AG04450 (cell line): ENCODE measurements at regions of chr17 and their contacts with region 1.

Region 1: GRCh38 chr17:45021607-45022287 is 29.7 kb downstream of the DCAKD start:
- DNase-seq: no peak
- H3K4me3 ChIP-seq: peak overlapping the region; percentile 54
- H3K27ac ChIP-seq: peak overlapping the region; percentile 11
- H3K27me3 ChIP-seq: peaks cover 6% of the 10 kb centered on the region
- CTCF ChIP-seq: peak; percentile 56

Region 2: GRCh38 chr17:44911133-44912001 is 110.4 kb before region 1 on chr17:
- CTCF ChIA-PET with region 1: interaction called, 18 read pairs
- POLR2A ChIA-PET with region 1: no interaction called
- DNase-seq: no peak
- H3K4me3 ChIP-seq: no peak overlapping the region
- H3K27ac ChIP-seq: no peak overlapping the region
- H3K27me3 ChIP-seq: peaks cover 12% of the 10 kb centered on the region
- CTCF ChIP-seq: peak; percentile 53

Region 3: DNA sequence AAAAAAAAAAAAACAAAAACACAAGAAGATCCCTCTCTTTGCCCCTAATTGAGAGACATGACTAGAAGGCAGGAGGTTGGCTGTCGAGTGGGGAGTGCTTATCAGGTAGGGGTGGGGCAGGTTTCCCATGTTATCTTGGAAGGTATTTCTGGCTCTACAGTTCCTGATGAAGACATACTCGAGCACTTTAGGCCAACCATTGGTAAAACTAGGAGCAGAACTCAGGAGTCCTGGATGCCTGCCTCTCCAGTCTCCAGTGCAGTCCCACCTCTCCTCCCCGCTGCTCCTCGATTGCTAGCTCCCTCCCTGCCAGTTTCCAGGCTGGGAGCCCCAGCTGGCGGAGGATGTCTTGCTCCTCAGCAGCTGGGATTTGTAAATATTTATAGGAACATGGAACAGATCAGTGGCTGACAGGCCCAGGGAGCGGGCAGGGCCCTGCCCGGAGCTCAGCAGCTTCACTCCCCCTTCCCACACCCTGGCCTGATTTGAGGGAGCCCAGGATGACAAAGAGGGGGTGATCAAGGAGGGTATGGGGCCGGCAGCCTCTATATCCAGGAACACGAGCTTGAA is 42.2 kb before region 1 on chr17:
- CTCF ChIA-PET with region 1: interaction called, 10 read pairs
- POLR2A ChIA-PET with region 1: interaction called, 3 read pairs
- DNase-seq: peak; percentile 70
- H3K4me3 ChIP-seq: no peak overlapping the region
- H3K27ac ChIP-seq: peak overlapping the region; percentile 87
- H3K27me3 ChIP-seq: peaks cover 2% of the 10 kb centered on the region
- CTCF ChIP-seq: no peak

Region 4: GRCh38 chr17:45051060-45051719 is 29.4 kb after region 1 on chr17 and contains the start of gene DCAKD:
- CTCF ChIA-PET with region 1: interaction called, 8 read pairs
- POLR2A ChIA-PET with region 1: interaction called, 11 read pairs
- DNase-seq: peak; percentile 86
- H3K4me3 ChIP-seq: peak within 1 kb of the TSS; percentile 71
- H3K27ac ChIP-seq: peak within 1 kb of the TSS; percentile 94
- H3K27me3 ChIP-seq: no peaks in the 10 kb centered on the region
- CTCF ChIP-seq: no peak
- polyA plus RNA-seq, gene DCAKD: 21.8 and 29.1 TPM in 2 replicates